HepG2 (cell line): ENCODE measurements at regions of chr10 and their contacts with region 1.

Region 1: GRCh38 chr10:70331486-70332268 is 47.9 kb upstream of the NPFFR1 start:
- DNase-seq: peak; percentile 84
- ATAC-seq: peak; percentile 80
- H3K4me3 ChIP-seq: peak overlapping the region in 1 of 3 experiments; percentile 37; a peak in 2 of 6 replicates
- H3K27ac ChIP-seq: peak overlapping the region; percentile 42
- H3K4me1 ChIP-seq: peaks cover 20% of the 10 kb centered on the region
- H3K27me3 ChIP-seq: no peaks in the 10 kb centered on the region
- CTCF ChIP-seq: peak; percentile 70
- EP300 ChIP-seq: 0 out of 4 replicates have a peak, but pooled peaks of 1 of the 2 experiments have one; percentile 13
- POLR2A ChIP-seq: no peak
- RAD21 ChIP-seq: peak; percentile 55; the same call in 1 of the 2 replicates

Region 2: GRCh38 chr10:70221030-70221429 is 110.6 kb before region 1 on chr10:
- CTCF ChIA-PET with region 1: interaction called, 3 read pairs
- POLR2A ChIA-PET with region 1: no interaction called
- in situ Hi-C with region 1: no loop called
- intact Hi-C with region 1: loop called (anchors 1 kb)
- DNase-seq: no peak
- ATAC-seq: no peak
- H3K4me3 ChIP-seq: no peak overlapping the region
- H3K27ac ChIP-seq: peak overlapping the region; percentile 15
- H3K4me1 ChIP-seq: peaks cover 25% of the 10 kb centered on the region
- H3K27me3 ChIP-seq: no peaks in the 10 kb centered on the region; a peak in 1 of 5 replicates
- CTCF ChIP-seq: no peak
- EP300 ChIP-seq: no peak
- POLR2A ChIP-seq: no peak
- RAD21 ChIP-seq: no peak